ENCODE measurements at regions of chr3 and their contacts with region 1.

Region 1: DNA sequence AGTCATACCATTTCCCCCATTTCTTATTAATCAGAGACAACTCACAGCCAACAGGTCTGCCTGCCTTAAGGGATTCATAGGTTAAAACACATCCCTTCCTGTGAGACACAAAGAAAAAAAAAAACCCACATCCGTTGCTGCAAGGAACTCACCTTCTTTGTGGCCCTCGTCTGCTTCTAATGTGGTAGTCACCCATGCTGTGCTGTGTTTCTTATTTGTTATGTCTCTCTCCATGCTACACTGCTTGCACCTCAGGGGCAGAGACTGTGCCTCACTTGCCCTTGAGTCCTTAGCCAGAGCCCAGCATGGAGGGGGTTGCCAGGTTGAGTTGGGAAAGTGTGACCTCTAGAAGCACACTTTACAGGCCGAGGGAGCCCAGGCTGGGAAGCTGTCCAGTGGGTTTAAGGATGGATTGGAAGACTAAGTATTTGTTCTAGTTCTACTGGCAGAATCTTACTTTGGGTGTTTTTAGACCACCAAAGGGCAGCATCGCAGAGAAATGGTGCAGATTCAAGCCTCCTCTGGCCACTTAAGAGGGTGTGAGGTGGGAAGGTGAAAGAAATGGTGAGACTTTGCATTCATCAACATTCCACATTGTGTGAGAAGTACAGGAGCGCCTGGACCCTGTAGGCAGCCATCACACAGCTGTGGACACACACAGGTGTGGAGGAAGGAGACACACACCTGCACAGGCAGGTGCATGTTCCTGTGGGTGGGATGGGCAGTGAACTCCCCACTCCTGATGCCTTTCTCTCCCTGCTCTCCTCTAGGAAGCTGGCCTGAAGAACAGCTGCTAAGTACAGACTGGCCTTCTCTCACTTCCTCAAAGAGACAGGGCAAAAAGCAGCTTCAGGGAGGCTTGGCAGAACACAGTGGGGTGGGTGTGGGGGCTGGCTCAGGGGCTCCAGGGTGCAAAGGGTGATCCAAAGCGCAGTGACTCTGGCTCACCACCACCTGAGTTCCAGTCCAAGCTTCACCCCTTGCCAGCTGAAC is 48.8 kb downstream of the GLB1 start:
- DNase-seq: peak in 8 of 9 donors; percentile 50 to 89 (median 84)
- ATAC-seq: peak; percentile 91
- H3K4me3 ChIP-seq: peak overlapping the region; percentile 28
- H3K4me3 Mint-ChIP-seq: peak overlapping the region; percentile 65 to 90 (median 82)
- H3K27ac ChIP-seq: no peak overlapping the region
- H3K27ac Mint-ChIP-seq: peak overlapping the region; percentile 58 to 98 (median 79)
- H3K4me1 ChIP-seq: peaks cover 60 to 82% of the 10 kb centered on the region in 2 donors
- H3K4me1 Mint-ChIP-seq: peaks cover 53 to 78% (median 69%) of the 10 kb centered on the region in 7 donors
- H3K27me3 ChIP-seq: no peaks in the 10 kb centered on the region
- H3K27me3 Mint-ChIP-seq: no peaks in the 10 kb centered on the region

Region 2: DNA sequence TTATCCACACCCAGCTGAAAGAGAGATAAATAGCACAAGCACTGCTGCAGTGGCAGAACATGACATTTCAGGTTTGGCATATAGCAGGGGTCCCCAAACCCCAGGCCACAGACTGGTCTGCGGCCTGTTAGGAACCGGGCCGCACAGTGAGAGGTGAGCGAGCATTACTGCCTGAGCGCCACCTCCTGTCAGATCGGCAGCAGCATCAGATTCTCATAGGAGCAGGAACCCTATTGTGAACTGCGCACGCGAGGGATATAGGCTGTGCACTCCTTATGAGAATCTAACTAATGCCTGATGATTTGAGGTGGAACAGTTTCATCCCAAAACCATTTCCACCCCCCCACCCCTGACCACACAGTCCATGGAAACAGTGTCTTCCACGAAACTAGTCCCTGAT is 42.1 kb before region 1 on chr3:
- CTCF ChIA-PET with region 1: no interaction called
- POLR2A ChIA-PET with region 1: no interaction called
- intact Hi-C with region 1: loop called in 1 of 2 experiments (anchors 5 kb)
- DNase-seq: no peak
- ATAC-seq: no peak
- H3K4me3 ChIP-seq: no peak overlapping the region
- H3K4me3 Mint-ChIP-seq: no peak overlapping the region
- H3K27ac ChIP-seq: no peak overlapping the region
- H3K27ac Mint-ChIP-seq: peak overlapping the region in 1 of 9 donors; percentile 3
- H3K4me1 ChIP-seq: peaks cover 14 to 17% of the 10 kb centered on the region in 2 donors
- H3K4me1 Mint-ChIP-seq: peaks cover 16 to 34% (median 24%) of the 10 kb centered on the region in 7 donors
- H3K27me3 ChIP-seq: no peaks in the 10 kb centered on the region
- H3K27me3 Mint-ChIP-seq: no peaks in the 10 kb centered on the region

Region 3: DNA sequence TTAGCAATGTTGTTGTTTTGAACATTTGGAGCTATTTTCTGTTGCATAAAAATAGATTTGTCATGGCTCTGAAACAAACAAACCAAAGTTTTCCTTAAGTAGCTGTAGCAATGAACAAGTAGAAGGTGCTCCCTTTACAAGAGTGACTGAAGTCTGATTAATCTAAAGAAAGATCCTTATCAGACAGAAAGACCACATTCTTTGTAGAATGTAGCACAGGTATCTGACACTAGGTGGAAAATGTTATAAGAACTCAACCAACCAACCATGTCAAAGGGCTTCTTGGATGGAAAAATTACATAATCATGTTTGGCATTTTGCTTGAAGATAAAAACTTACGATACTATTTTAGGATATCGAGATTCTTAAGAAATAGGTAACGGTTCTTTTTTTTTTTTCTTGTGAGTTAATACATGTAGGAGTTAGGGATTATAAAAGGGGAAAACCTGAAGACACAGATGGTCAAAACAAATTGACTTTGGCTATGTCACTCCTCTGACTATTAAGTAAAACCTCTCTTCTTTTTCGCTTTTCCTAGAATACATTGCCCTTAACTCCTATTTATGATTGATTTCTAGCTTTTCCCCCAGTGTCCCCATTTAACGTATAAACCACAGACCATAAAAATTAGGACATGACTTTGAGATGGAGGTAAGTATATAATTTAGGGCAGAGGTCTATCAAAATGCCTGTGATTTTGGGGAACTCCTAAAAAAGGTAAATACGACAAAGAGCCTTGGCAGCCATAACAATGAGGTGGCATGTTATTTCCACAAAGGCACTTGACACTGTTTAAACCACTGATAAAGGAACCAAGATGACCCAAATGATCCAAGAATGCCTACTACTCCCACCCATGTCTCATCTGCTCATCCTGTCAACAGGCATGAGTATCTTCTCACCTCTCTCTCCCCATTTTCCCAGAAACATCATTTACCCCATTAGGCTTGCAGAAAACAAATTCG is 24.7 kb before region 1 on chr3:
- CTCF ChIA-PET with region 1: no interaction called
- POLR2A ChIA-PET with region 1: no interaction called
- intact Hi-C with region 1: loop called (anchors 1 kb)
- DNase-seq: peak in 6 of 9 donors; percentile 5 to 34 (median 26)
- ATAC-seq: peak; percentile 76
- H3K4me3 ChIP-seq: no peak overlapping the region
- H3K4me3 Mint-ChIP-seq: peak overlapping the region in 4 of 10 donors; percentile 1 to 37 (median 20)
- H3K27ac ChIP-seq: no peak overlapping the region
- H3K27ac Mint-ChIP-seq: peak overlapping the region in 5 of 9 donors; percentile 13 to 56 (median 44)
- H3K4me1 ChIP-seq: peaks cover 13 to 15% of the 10 kb centered on the region in 2 donors
- H3K4me1 Mint-ChIP-seq: peaks cover 15 to 54% (median 40%) of the 10 kb centered on the region in 7 donors
- H3K27me3 ChIP-seq: no peaks in the 10 kb centered on the region
- H3K27me3 Mint-ChIP-seq: no peaks in the 10 kb centered on the region

Region 4: GRCh38 chr3:33030802-33031201 is 17.3 kb before region 1 on chr3:
- CTCF ChIA-PET with region 1: interaction called, 5 read pairs
- POLR2A ChIA-PET with region 1: interaction called, 3 read pairs
- intact Hi-C with region 1: loop called in 1 of 2 experiments (anchors 1 kb)
- DNase-seq: no peak
- ATAC-seq: peak; percentile 65
- H3K4me3 ChIP-seq: no peak overlapping the region
- H3K4me3 Mint-ChIP-seq: peak overlapping the region in 1 of 10 donors; percentile 12
- H3K27ac ChIP-seq: no peak overlapping the region
- H3K27ac Mint-ChIP-seq: peak overlapping the region in 2 of 9 donors; percentile 24 to 32
- H3K4me1 ChIP-seq: peaks cover 0 to 11% of the 10 kb centered on the region in 2 donors
- H3K4me1 Mint-ChIP-seq: peaks cover 0 to 27% (median 7%) of the 10 kb centered on the region in 7 donors
- H3K27me3 ChIP-seq: no peaks in the 10 kb centered on the region
- H3K27me3 Mint-ChIP-seq: no peaks in the 10 kb centered on the region

Region 5: DNA sequence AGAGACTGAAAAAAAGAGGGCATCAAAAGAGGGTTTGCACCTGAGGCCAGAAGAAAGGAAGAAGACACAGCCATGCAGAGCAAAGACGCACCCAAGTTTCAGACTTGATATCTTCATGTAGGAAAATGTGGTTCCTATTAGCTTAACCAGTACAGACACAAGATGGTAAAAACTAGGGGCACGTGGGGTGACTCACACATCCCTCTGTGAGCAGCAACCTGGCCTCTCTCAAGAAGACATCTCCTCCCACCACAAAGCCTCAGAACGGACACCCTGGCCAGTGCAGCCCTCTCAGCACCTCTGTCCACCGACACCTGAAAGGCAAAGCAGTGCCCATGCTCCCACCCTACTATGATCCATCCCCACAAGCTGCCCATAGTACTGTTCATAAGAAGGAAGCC is 15.5 kb after region 1 on chr3:
- CTCF ChIA-PET with region 1: interaction called, 3 read pairs
- POLR2A ChIA-PET with region 1: interaction called, 54 read pairs
- intact Hi-C with region 1: loop called (anchors 1 kb)
- DNase-seq: peak in 1 of 9 donors; percentile 61
- ATAC-seq: peak; percentile 47
- H3K4me3 ChIP-seq: no peak overlapping the region
- H3K4me3 Mint-ChIP-seq: peak overlapping the region in 9 of 10 donors; percentile 8 to 68 (median 43)
- H3K27ac ChIP-seq: no peak overlapping the region
- H3K27ac Mint-ChIP-seq: peak overlapping the region; percentile 1 to 85 (median 39)
- H3K4me1 ChIP-seq: peaks cover 44 to 55% of the 10 kb centered on the region in 2 donors
- H3K4me1 Mint-ChIP-seq: peaks cover 35 to 55% (median 48%) of the 10 kb centered on the region in 7 donors
- H3K27me3 ChIP-seq: no peaks in the 10 kb centered on the region
- H3K27me3 Mint-ChIP-seq: no peaks in the 10 kb centered on the region

Region 6: GRCh38 chr3:33096093-33096868 is 48.1 kb after region 1 on chr3:
- CTCF ChIA-PET with region 1: no interaction called
- POLR2A ChIA-PET with region 1: no interaction called
- intact Hi-C with region 1: loop called in 1 of 2 experiments (anchors 2 kb)
- DNase-seq: peak in 8 of 9 donors; percentile 23 to 52 (median 39)
- ATAC-seq: peak; percentile 71
- H3K4me3 ChIP-seq: peak overlapping the region; percentile 90
- H3K4me3 Mint-ChIP-seq: peak overlapping the region; percentile 90 to 98 (median 94)
- H3K27ac ChIP-seq: peak overlapping the region; percentile 71
- H3K27ac Mint-ChIP-seq: peak overlapping the region; percentile 66 to 87 (median 80)
- H3K4me1 ChIP-seq: peaks cover 0 to 17% of the 10 kb centered on the region in 2 donors
- H3K4me1 Mint-ChIP-seq: peaks cover 24 to 45% (median 37%) of the 10 kb centered on the region in 7 donors
- H3K27me3 ChIP-seq: no peaks in the 10 kb centered on the region
- H3K27me3 Mint-ChIP-seq: peaks cover 0 to 4% (median 0%) of the 10 kb centered on the region in 5 donors

Region 7: GRCh38 chr3:33113772-33114621 is 65.9 kb after region 1 on chr3 and contains the start of gene CRTAP:
- CTCF ChIA-PET with region 1: no interaction called
- POLR2A ChIA-PET with region 1: no interaction called
- intact Hi-C with region 1: loop called in 1 of 2 experiments (anchors 2 kb)
- DNase-seq: peak; percentile 69 to 86 (median 79)
- ATAC-seq: peak; percentile 92
- H3K4me3 ChIP-seq: peak within 1 kb of the TSS; percentile 82
- H3K4me3 Mint-ChIP-seq: peak within 1 kb of the TSS; percentile 88 to 95 (median 92)
- H3K27ac ChIP-seq: peak within 1 kb of the TSS; percentile 69
- H3K27ac Mint-ChIP-seq: peak within 1 kb of the TSS; percentile 75 to 91 (median 85)
- H3K4me1 ChIP-seq: peaks cover 17 to 23% of the 10 kb centered on the region in 2 donors
- H3K4me1 Mint-ChIP-seq: peaks cover 23 to 52% (median 37%) of the 10 kb centered on the region in 7 donors
- H3K27me3 ChIP-seq: no peaks in the 10 kb centered on the region
- H3K27me3 Mint-ChIP-seq: no peaks in the 10 kb centered on the region
- total RNA-seq, gene CRTAP: 27.1 to 86.1 (median 46.4) TPM

Measured in naive thymus-derived CD4-positive, alpha-beta T cell (primary cell).